ENCODE measurements at regions of chr4 and their contacts with region 1.

Region 1: GRCh38 chr4:85147439-85148076 is 181.1 kb upstream of the WDFY3 start:
- DNase-seq: peak; percentile 30
- ATAC-seq: no peak
- H3K4me3 Mint-ChIP-seq: no peak overlapping the region
- H3K27ac Mint-ChIP-seq: no peak overlapping the region
- H3K4me1 Mint-ChIP-seq: no peaks in the 10 kb centered on the region
- H3K27me3 Mint-ChIP-seq: peaks cover 3% of the 10 kb centered on the region
- CTCF ChIP-seq: peak; percentile 52

Region 2: DNA sequence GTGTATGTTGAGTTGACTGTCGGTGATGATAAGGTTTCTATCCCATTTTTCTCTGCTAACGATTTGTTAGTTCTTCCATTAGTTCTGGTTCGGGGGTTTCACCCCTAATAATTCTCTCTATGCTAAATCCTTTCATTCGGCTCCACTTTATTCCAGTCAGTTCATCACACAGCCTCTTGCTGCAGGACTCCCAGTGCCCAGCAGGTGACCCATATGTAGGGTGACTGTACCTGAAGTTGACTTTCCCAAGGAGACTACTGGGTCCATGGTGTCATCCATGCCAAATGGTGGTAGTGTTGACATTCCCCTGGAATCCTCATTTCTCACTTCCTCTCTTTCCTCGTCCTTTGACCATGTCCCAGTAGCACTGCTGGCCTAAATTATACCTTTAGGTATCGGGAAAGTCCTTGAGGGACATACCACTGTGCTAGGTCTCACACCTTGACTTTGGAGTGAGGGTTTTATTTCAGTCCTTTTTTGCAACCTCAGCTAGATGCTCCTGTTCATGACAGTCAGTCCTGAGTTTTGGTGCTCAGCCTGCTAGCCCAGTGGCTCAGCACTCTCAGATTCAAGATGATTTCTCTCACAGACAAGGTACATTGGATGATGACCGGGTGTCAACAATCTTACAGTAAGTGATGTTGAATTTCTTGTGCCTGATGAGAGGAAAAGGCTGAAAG is 222.3 kb after region 1 on chr4:
- CTCF ChIA-PET with region 1: interaction called, 3 read pairs
- POLR2A ChIA-PET with region 1: no interaction called
- intact Hi-C with region 1: loop called (anchors 10 kb)
- DNase-seq: no peak
- ATAC-seq: no peak
- H3K4me3 Mint-ChIP-seq: no peak overlapping the region
- H3K27ac Mint-ChIP-seq: no peak overlapping the region
- H3K4me1 Mint-ChIP-seq: no peaks in the 10 kb centered on the region
- H3K27me3 Mint-ChIP-seq: no peaks in the 10 kb centered on the region
- CTCF ChIP-seq: no peak